ENCODE measurements at regions of chr14 and their contacts with region 1.

Region 1: DNA sequence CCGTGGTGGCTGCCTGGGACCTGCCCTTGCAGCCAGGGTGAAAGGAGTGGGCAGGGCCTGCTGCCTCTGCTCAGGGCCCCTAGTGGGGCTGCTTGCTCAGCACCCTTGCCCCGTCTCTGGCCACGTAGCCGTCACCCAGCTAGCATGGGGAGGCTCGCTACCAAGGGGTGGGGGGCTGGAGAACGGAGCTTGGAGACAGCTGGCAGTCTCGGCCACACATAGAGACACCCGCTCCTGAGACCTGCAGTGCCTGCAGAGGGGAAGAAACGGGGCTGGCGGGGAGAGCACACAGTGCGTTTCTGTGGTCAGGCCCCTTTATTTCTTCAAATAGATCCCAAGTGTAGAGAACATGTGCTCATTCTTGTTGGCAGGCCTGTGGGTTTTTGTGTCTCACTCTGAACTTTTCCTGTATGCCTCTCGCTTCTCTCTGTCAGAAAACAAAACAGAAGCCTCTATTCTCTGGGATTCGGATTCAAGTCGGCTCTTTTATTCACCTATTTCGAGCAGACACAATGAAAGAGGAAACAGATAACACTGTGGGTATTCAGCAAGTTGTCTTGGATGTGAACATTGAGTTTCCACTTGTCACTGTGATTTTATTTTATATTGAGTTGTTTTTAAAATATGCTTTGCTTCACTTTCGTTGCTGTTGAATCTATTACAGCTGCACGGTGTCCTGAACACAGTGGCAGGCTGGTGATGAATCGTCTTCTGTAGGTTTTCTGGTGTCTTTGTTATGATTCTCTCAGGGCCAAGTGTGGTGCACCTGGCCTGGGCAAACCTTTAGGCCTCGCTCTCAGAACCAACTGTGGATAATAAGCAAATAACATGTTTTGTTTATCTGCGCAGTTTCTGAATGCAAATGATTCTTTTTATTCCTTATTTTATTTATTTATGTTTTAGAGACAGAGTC is 26.5 kb downstream of the PACS2 start:
- DNase-seq: peak in 2 of 3 donors; percentile 40 to 55
- H3K4me3 ChIP-seq: peak overlapping the region in 2 of 7 experiments; percentile 3 to 6
- H3K27ac ChIP-seq: peak overlapping the region in 1 of 2 experiments; percentile 23
- H3K4me1 ChIP-seq: peaks cover 0 to 34% (median 32%) of the 10 kb centered on the region in 4 experiments
- H3K27me3 ChIP-seq: no peaks in the 10 kb centered on the region

Region 2: DNA sequence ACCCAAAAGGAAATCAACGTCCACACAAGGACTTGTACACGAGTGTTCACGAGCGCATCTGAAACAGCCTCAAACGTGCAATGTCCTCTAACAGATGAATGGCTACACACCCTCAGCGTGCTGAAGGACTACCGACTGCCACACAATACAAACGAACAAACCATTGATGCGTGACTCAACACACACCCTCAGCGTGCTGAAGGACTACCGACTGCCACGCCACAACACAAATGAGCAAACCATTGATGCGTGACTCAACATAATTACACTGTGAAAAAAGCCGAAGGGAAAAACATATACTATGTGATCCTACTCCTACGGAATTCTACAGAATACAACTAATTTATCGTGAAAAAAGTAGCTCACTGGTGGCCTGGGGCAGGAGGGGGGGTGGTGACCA is 117.8 kb before region 1 on chr14:
- CTCF ChIA-PET with region 1: no interaction called
- POLR2A ChIA-PET with region 1: no interaction called
- DNase-seq: no peak
- H3K4me3 ChIP-seq: no peak overlapping the region
- H3K27ac ChIP-seq: no peak overlapping the region
- H3K4me1 ChIP-seq: no peaks in the 10 kb centered on the region
- H3K27me3 ChIP-seq: no peaks in the 10 kb centered on the region

Region 3: GRCh38 chr14:105351920-105352851 is 11.1 kb after region 1 on chr14:
- CTCF ChIA-PET with region 1: interaction called, 11 read pairs
- POLR2A ChIA-PET with region 1: no interaction called
- DNase-seq: peak; percentile 91 to 96 (median 95)
- H3K4me3 ChIP-seq: no peak overlapping the region
- H3K27ac ChIP-seq: no peak overlapping the region
- H3K4me1 ChIP-seq: peaks cover 0 to 8% (median 6%) of the 10 kb centered on the region in 4 experiments
- H3K27me3 ChIP-seq: no peaks in the 10 kb centered on the region

Region 4: DNA sequence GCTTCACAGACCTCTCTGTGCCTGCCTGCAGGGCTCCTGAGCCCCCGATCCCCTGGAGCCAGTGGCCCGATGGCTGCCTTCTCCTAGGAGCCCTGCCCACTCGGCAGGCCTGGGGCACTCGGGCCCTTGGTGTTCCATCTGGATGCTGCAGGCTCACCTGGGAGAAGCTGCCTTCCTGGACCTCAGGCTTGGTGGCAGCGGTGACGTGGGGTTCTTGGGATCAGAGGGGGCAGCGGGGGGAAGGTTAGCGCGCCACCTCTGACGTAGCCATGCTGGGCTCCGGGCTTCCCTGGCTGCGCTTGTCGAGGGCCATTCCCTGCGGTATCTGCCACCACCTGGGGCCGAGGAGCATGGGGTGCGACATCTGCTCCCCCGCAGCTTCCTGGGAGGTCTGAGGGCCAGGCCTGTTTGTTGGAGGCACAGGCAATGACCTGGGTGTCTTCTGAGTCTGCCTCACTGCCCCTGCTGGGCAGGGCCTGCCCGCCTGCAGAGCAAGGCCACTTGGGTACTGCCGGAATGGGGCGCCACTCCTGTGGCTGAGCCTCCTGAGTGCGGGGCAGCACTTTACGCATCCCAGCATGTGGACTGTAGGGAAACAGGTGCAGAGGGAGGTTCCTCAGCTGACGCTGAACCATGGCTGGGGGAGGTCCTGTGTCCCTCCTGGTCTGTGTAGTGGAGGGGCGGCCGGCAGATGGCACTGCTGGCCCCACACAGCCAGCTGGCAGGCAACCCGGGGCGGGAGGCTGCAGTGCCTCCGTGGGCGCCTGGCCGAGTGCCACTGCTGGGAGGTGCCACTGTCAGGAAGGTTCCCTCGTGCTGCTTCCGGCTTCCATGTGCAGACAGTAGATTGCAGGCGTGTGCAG is 98.8 kb after region 1 on chr14:
- CTCF ChIA-PET with region 1: no interaction called
- POLR2A ChIA-PET with region 1: no interaction called
- DNase-seq: no peak
- H3K4me3 ChIP-seq: no peak overlapping the region
- H3K27ac ChIP-seq: no peak overlapping the region
- H3K4me1 ChIP-seq: no peaks in the 10 kb centered on the region
- H3K27me3 ChIP-seq: no peaks in the 10 kb centered on the region